ENCODE measurements at regions of chrX and their contacts with region 1.

Region 1: GRCh38 chrX:48957827-48958634 is 624 bp upstream of the OTUD5 start:
- DNase-seq: peak; percentile 94

Region 2: DNA sequence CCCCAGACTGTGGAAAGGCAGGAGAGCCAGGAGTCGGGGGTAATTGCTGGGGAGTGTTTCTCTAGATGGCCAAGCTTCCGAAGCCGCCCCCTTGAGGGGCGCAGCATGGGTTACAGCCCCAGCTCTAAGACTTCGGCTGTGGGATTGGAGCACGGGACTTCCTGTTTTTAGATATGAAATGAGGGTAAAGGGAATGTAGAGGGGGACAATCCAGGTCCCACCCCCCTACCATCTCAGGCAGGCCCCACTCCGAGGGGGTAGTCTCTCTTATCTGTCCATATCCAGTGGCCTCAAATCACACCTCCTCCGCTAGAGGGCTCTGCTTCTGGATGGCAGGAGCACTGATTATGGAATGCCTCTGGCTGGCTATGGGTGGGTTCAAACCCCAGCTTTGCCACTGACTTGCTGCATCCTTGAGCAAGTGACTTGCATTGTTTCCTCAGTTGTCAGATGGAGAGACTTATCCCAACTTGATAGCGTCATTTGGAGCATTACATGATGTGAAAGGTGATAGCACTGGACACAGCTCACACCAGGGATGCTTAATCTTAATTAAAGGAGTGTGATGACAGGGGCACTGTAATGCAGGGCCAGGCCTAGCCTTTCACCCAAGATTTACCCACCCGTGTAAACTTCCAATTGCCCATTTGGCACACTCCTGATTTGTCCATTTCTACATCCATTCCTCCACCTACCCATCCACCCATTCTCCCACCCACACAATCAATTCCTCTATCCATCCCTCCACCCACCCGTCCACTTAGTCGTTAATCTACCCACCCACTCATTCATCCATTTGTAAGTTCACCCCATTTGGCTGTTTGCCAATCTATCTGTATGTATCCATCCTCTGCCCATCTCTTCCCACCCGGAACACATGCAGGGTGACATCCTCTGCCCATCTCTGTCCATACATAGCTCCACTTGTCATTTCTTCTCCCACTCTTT is 14.5 kb after region 1 on chrX:
- CTCF ChIA-PET with region 1: interaction called, 3 read pairs
- POLR2A ChIA-PET with region 1: interaction called, 12 read pairs
- DNase-seq: peak; percentile 64

Region 3: GRCh38 chrX:49002091-49002935 is 44.3 kb after region 1 on chrX and contains the start of gene GRIPAP1:
- CTCF ChIA-PET with region 1: no interaction called
- POLR2A ChIA-PET with region 1: interaction called, 14 read pairs
- DNase-seq: peak; percentile 85

Region 4: DNA sequence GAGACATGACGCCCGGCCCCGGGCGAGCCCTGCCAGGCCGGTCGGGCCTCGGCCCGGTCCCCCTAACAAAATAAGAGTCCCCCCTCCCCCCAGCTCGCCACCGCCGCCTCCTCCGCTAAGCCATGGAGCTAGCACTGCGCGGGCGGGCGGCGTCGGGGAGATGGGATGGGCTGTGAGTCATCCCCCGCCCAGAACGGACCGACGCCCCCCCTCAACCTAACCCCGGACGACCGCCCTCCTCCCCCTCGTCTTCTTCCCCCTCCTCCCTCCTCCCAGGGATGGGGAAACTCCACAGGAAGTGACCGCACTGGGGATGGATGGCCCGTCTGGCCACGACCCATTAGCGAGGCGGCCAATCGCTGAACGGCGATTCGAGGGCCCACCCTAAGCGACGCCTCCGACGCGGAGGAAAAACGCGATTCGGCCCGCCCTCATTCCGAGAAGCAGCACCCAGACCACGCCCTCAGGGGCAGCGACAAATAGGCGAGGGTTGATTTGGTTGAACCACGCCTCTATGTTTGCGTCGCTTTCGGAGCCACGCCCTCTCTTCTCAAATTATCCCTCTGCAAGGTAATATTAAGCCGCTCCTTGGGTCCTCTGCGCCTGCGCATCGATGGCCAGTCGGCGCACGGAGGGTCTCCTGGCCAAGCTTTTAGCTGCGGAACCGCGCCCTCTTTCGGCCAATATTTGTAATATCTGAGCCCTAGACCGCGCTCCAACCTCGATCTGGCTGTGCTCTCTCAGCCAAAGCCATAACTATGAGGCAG is 85.4 kb after region 1 on chrX and contains the start of gene TFE3:
- CTCF ChIA-PET with region 1: no interaction called
- POLR2A ChIA-PET with region 1: interaction called, 13 read pairs
- DNase-seq: peak; percentile 89

Measured in HEK293T (cell line).